Heart left ventricle (tissue), 16 donors: ENCODE measurements at regions of chr4 and their contacts with region 1.

Region 1: GRCh38 chr4:89434364-89434988 is 126.9 kb upstream of the GPRIN3 start:
- DNase-seq: no peak
- ATAC-seq: peak in 3 of 4 donors; percentile 52 to 70 (median 68)
- H3K4me3 ChIP-seq: no peak overlapping the region
- H3K27ac ChIP-seq: no peak overlapping the region
- H3K4me1 ChIP-seq: no peaks in the 10 kb centered on the region
- H3K27me3 ChIP-seq: no peaks in the 10 kb centered on the region
- CTCF ChIP-seq: peak; percentile 60 to 84 (median 72)
- POLR2A ChIP-seq: no peak

Region 2: DNA sequence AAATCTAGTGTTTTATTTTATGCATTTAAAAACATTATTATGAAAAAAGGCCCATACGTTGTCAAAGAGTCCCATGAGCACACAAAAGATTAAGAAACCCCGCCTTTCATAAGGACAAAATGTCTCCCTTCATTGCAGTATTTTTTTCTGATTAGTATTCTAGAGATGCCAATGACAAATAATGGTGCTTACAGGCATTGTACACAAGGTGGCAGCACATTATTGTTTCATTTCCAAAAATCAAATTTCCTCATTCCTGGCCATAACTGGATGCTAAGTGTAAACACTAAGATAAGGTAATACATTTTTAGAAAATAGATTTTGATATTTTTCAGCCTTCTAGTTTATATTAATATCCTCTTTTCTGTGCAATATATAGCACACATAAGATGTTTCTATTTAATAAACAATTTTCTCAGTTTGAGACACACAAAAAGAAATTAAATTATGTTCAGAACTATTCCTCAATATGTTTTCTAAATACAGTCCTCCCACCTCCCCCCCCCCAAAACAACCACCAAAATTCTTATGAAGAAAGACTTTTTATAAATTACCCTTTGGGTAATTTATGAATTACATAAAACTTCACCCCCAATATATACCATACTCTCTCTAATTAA is 275.5 kb before region 1 on chr4:
- intact Hi-C with region 1: loop called in 9 of 10 experiments (anchors 2 to 10 kb)
- DNase-seq: no peak
- ATAC-seq: peak in 3 of 4 donors; percentile 34 to 55 (median 45)
- H3K4me3 ChIP-seq: no peak overlapping the region
- H3K27ac ChIP-seq: no peak overlapping the region
- H3K4me1 ChIP-seq: peaks cover 0 to 10% (median 0%) of the 10 kb centered on the region in 12 donors
- H3K27me3 ChIP-seq: no peaks in the 10 kb centered on the region
- CTCF ChIP-seq: peak; percentile 59 to 84 (median 74)
- POLR2A ChIP-seq: no peak

Region 3: GRCh38 chr4:89164400-89164799 is 270.1 kb before region 1 on chr4:
- intact Hi-C with region 1: loop called (anchors 2 to 10 kb)
- DNase-seq: no peak
- ATAC-seq: no peak
- H3K4me3 ChIP-seq: no peak overlapping the region
- H3K27ac ChIP-seq: no peak overlapping the region
- H3K4me1 ChIP-seq: no peaks in the 10 kb centered on the region
- H3K27me3 ChIP-seq: no peaks in the 10 kb centered on the region
- CTCF ChIP-seq: no peak
- POLR2A ChIP-seq: no peak

Region 4: GRCh38 chr4:89226665-89227574 is 207.6 kb before region 1 on chr4:
- intact Hi-C with region 1: loop called (anchors 1 to 2 kb)
- DNase-seq: peak; percentile 70 to 83 (median 79)
- ATAC-seq: peak; percentile 90 to 99 (median 96)
- H3K4me3 ChIP-seq: no peak overlapping the region
- H3K27ac ChIP-seq: no peak overlapping the region
- H3K4me1 ChIP-seq: peaks cover 0 to 3% (median 0%) of the 10 kb centered on the region in 12 donors
- H3K27me3 ChIP-seq: no peaks in the 10 kb centered on the region
- CTCF ChIP-seq: peak; percentile 55 to 82 (median 72)
- POLR2A ChIP-seq: no peak

Region 5: DNA sequence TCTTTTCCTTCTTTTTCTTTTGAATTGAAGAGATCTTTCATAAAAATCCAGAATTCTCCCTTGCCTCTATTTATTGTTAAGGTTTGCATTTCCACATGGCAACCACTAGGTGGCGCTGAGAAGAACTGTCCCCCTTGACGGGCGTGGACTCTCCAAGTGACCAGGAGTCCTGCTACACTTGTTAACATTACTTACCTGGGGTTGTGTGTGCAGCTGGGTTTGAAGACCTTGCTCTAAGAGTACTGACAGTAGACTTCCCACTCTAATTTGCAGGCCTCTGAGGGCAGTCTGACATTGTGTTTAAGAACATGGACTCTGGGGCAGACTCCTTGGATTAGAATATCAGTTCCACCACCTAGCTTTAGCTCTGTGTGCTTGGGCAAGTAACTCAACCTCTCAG is 179.6 kb before region 1 on chr4:
- intact Hi-C with region 1: loop called in 1 of 10 experiments (anchors 10 kb)
- DNase-seq: no peak
- ATAC-seq: peak in 3 of 4 donors; percentile 25 to 47 (median 29)
- H3K4me3 ChIP-seq: no peak overlapping the region
- H3K27ac ChIP-seq: peak overlapping the region in 1 of 12 donors; percentile 8
- H3K4me1 ChIP-seq: peaks cover 0 to 56% (median 23%) of the 10 kb centered on the region in 12 donors
- H3K27me3 ChIP-seq: no peaks in the 10 kb centered on the region
- CTCF ChIP-seq: peak; percentile 51 to 80 (median 66)
- POLR2A ChIP-seq: no peak

Region 6: DNA sequence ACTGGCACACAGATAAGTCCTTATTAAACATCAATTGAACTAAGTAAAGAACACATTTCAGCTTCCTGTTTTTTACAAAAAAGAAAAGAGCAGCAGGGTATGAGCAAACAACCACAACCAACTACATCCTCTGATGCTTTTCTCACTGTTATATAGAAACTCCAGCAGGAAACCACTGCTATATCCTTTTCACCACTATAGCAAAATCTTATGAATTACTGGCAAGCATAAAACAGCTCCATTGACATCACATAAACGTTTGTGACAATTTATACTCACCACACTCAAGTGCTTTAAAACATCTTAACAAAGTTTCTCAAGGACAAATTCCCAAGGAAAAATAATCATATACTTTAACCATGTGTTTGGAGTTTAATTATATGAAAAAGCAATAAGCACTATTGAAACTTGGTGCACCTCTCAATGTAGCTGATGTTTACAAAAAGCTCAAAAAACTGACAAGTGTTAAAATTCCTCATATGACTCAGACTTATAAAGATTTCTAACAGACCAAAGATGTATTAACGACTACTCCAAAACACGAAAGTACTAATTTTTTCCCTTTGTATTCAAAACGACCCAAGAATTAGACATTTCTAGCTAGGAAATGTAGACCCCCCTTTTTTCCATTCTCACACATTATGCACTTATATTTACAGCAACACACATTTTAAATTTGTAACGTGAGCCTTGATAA is 139.8 kb before region 1 on chr4:
- intact Hi-C with region 1: no loop called
- DNase-seq: no peak
- ATAC-seq: peak in 1 of 4 donors; percentile 30
- H3K4me3 ChIP-seq: no peak overlapping the region
- H3K27ac ChIP-seq: peak overlapping the region in 3 of 12 donors; percentile 47 to 92 (median 61)
- H3K4me1 ChIP-seq: peaks cover 3 to 97% (median 35%) of the 10 kb centered on the region in 12 donors
- H3K27me3 ChIP-seq: no peaks in the 10 kb centered on the region
- CTCF ChIP-seq: no peak
- POLR2A ChIP-seq: no peak

Region 7: DNA sequence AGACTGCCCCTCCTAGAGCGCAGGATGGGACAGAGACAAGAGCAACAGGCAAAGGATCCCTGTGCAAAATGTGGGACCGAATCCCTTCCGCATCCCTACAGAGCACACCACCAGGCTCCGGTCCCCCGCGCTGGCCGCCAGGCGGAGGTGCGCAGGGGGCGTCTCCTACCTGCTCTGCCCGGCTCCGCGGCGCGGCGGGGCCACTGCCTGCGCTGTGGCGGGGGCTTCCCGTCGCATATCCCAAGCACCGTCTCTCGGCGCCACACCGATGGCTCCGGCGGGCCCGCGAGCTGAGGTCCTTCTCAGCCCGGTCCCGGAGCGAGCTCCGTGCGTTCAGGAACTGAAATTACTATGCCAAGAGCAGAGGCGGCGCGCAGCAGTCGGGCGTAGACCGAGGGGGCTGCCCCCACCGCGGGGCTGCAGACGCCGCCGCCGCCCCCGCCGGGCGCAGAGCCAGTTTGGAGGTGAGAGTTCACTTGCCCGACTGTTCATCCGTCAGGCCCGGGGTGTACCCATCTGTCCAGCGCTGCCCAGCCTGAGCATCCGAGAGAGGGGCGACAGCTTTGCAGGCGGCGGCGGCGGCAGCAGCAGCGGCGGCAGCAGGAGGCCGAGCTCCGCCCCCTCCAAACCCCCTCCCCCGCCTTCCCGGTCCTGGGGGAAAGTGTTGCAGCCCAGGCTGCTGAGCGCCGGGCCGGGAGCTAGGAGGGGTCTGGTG is 126.9 kb before region 1 on chr4 and contains the start of gene GPRIN3:
- intact Hi-C with region 1: loop called in 3 of 10 experiments (anchors 10 kb)
- DNase-seq: peak; percentile 66 to 84 (median 66)
- ATAC-seq: peak; percentile 38 to 78 (median 68)
- H3K4me3 ChIP-seq: peak within 1 kb of the TSS; percentile 62 to 94 (median 80)
- H3K27ac ChIP-seq: peak within 1 kb of the TSS; percentile 70 to 92 (median 79)
- H3K4me1 ChIP-seq: peaks cover 0 to 47% (median 18%) of the 10 kb centered on the region in 12 donors
- H3K27me3 ChIP-seq: peaks cover 0 to 4% (median 0%) of the 10 kb centered on the region in 9 donors
- CTCF ChIP-seq: peak in 1 of 12 donors; percentile 9
- POLR2A ChIP-seq: no peak
- total RNA-seq, gene GPRIN3: 6.3 to 16.5 (median 13.8) TPM

Region 8: GRCh38 chr4:89316931-89317366 is 117.5 kb before region 1 on chr4:
- intact Hi-C with region 1: loop called in 1 of 10 experiments (anchors 10 kb)
- DNase-seq: no peak
- ATAC-seq: peak in 3 of 4 donors; percentile 22 to 46 (median 24)
- H3K4me3 ChIP-seq: no peak overlapping the region
- H3K27ac ChIP-seq: peak overlapping the region in 1 of 12 donors; percentile 76
- H3K4me1 ChIP-seq: peaks cover 0 to 34% (median 8%) of the 10 kb centered on the region in 12 donors
- H3K27me3 ChIP-seq: no peaks in the 10 kb centered on the region
- CTCF ChIP-seq: no peak
- POLR2A ChIP-seq: no peak